Right ventricle myocardium superior (tissue), 1 donor: ENCODE measurements at regions of chr2 and their contacts with region 1.

Region 1: GRCh38 chr2:11778923-11779757 is 32.7 kb downstream of the LPIN1 start:
- DNase-seq: peak; percentile 90
- ATAC-seq: peak; percentile 94

Region 2: GRCh38 chr2:11738589-11739436 is 40.3 kb before region 1 on chr2:
- intact Hi-C with region 1: loop called (anchors 2 kb)
- DNase-seq: peak; percentile 84
- ATAC-seq: peak; percentile 92